ENCODE measurements at regions of chr4 and their contacts with region 1.

Region 1: DNA sequence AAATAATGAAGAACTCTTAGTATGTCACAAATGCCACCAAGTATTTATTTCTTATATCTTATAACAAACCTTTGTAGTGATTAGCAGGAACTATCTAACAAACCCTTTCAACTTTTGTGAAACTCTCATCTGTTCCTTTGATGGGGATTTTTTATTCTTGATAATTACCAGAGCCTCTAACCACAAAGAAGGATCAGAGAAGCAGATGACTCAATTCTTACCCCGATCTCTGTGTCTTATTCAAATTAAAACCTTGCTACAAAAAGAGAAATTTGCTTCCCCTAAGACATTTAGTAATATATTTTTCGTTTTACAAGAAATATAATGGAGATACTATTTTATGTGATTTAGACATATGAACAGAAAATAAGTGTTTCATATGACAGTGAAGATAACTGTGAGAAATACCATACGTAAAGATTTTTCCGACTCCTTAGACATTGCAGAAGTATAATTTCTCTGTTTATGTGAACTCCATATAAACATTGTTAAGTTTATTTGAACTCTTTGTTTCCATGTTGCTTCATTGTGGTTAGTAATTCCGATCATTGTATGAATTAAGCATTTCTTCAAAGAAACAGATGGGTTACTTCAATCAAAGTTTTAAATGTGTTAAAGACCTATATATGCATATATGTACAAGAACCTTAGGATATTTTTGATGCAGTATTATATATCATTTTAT is 205.4 kb downstream of the CFAP299 start:
- DNase-seq: peak in 4 of 5 donors; percentile 17 to 36 (median 26)
- H3K4me3 ChIP-seq: no peak overlapping the region
- H3K4me3 Mint-ChIP-seq: peak overlapping the region in 6 of 8 donors; percentile 6 to 66 (median 50)
- H3K27ac ChIP-seq: no peak overlapping the region
- H3K27ac Mint-ChIP-seq: no peak overlapping the region
- H3K4me1 ChIP-seq: peaks cover 17% of the 10 kb centered on the region
- H3K4me1 Mint-ChIP-seq: peaks cover 9 to 22% (median 18%) of the 10 kb centered on the region in 4 donors
- H3K27me3 ChIP-seq: no peaks in the 10 kb centered on the region
- H3K27me3 Mint-ChIP-seq: peaks cover 0 to 7% of the 10 kb centered on the region in 2 donors

Region 2: DNA sequence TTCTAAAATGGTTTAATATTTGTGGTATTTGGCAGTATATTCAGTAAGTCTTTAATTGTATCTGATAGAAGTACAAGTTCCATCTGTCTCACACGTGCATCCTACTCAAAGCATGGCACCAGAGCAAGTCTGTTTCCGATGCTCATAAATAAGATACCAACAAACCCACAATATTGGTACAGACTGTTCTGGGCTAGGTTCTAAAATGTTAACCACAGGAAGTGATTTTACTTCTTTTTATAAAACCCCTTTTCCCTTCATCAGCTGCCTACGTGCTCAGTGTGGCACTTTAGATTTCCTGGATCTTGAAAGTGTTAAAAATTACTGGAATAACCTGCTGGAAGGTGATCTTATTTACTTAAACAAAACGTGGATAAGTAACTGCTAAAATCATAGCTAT is 40.3 kb before region 1 on chr4:
- CTCF ChIA-PET with region 1: no interaction called
- POLR2A ChIA-PET with region 1: no interaction called
- intact Hi-C with region 1: loop called (anchors 5 kb)
- DNase-seq: peak; percentile 50 to 73 (median 63)
- H3K4me3 ChIP-seq: no peak overlapping the region
- H3K4me3 Mint-ChIP-seq: peak overlapping the region; percentile 1 to 81 (median 40)
- H3K27ac ChIP-seq: no peak overlapping the region
- H3K27ac Mint-ChIP-seq: peak overlapping the region; percentile 54 to 93 (median 78)
- H3K4me1 ChIP-seq: peaks cover 45% of the 10 kb centered on the region
- H3K4me1 Mint-ChIP-seq: peaks cover 42 to 63% (median 56%) of the 10 kb centered on the region in 4 donors
- H3K27me3 ChIP-seq: no peaks in the 10 kb centered on the region
- H3K27me3 Mint-ChIP-seq: no peaks in the 10 kb centered on the region